PC-9 (cell line): ENCODE measurements at regions of chr10 and their contacts with region 1.

Region 1: GRCh38 chr10:52883996-52884871 is 111.7 kb upstream of the MBL2 start:
- DNase-seq: peak; percentile 91 to 98
- H3K4me3 ChIP-seq: peak overlapping the region; percentile 13; the same call in 1 of the 2 replicates
- H3K27ac ChIP-seq: peak overlapping the region; percentile 28; the same call in 1 of the 2 replicates
- H3K4me1 ChIP-seq: peaks cover 13% of the 10 kb centered on the region; the same call in 1 of the 2 replicates
- H3K27me3 ChIP-seq: 0 out of 2 replicates have a peak, but pooled peaks cover 7% of the 10 kb centered on the region
- CTCF ChIP-seq: peak; percentile 97

Region 2: DNA sequence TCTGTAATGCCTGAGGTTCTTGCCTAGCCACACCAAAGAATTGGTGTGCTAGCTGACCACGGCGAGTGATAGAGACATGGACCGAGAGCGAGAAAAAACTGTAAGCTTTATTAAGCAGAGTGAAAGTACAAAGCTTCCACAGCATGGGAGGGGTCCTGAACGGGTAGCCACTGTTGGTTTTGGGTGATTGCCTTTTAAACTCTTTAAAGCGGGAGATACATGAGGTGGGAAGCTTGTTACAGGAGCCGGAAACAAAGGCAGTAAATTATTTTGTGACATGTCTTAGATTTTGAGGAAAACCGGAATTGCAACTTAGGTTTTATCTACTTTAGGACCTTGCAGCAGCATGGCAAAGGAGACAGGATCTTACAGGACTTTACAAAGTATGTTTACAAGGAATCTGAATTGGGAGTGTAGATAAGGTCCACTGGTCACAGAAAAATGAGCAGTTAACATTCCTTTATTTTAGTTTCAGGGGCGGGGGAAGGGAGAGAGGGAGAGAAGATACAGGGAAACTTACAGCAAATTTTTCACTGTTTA is 141.0 kb after region 1 on chr10:
- CTCF ChIA-PET with region 1: no interaction called
- POLR2A ChIA-PET with region 1: no interaction called
- intact Hi-C with region 1: loop called (anchors 2 kb)
- DNase-seq: peak; percentile 29 to 49
- H3K4me3 ChIP-seq: peak overlapping the region; percentile 40; the same call in 1 of the 2 replicates
- H3K27ac ChIP-seq: peak overlapping the region; percentile 51
- H3K4me1 ChIP-seq: peaks cover 30% of the 10 kb centered on the region
- H3K27me3 ChIP-seq: no peaks in the 10 kb centered on the region
- CTCF ChIP-seq: no peak

Region 3: DNA sequence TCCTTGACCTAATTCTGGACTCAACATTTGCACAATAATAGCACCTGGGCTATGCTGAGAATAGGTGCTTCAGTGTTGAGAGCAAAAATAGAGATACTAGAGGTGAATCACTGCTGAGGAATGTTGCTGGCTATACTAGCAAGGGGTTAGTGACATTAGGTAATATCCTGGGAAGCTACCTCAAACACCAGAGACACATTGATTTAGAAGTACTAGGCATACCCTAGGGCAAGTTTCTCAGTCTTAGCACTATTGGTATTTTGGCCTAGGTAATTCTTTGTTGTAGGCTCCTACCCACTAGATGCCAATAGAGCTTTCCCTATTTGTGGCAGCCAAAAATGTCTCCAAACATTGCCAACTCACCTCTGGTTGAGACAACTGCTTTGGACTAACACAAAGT is 372.4 kb after region 1 on chr10:
- CTCF ChIA-PET with region 1: no interaction called
- POLR2A ChIA-PET with region 1: interaction called, 15 read pairs
- intact Hi-C with region 1: loop called (anchors 1 kb)
- DNase-seq: peak; percentile 48 to 92
- H3K4me3 ChIP-seq: no peak overlapping the region
- H3K27ac ChIP-seq: peak overlapping the region; percentile 65
- H3K4me1 ChIP-seq: peaks cover 20% of the 10 kb centered on the region
- H3K27me3 ChIP-seq: no peaks in the 10 kb centered on the region
- CTCF ChIP-seq: no peak

Region 4: DNA sequence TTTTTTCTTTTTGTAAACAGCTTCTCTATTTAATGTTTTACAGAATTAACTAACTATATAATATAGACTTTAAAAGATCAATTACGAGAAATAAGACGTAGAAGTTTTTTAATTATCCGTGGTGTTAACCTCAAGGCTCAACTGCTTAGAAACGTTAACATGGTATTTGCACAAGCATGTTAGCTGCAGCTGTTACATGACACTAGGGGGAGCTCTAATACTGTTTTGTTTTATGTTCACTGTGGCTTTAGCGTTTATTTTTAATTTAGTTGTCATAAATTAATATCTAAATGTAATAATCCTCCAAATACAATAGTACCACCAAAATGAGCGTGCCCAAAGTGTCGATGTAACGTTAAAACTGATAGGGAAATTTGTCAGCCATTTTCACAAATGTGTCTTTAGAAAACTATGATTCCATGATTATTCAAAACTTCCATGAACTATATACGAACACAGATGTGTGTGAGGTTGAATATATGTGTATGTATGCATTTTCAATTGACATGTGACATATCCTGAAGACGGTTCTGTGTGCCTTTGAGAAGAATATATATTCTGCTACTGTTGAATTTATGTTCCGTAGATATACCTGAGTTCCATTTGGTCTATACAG is 717.1 kb after region 1 on chr10:
- CTCF ChIA-PET with region 1: no interaction called
- POLR2A ChIA-PET with region 1: no interaction called
- intact Hi-C with region 1: loop called (anchors 5 kb)
- DNase-seq: peak in 1 of 2 experiments; percentile 39
- H3K4me3 ChIP-seq: no peak overlapping the region
- H3K27ac ChIP-seq: no peak overlapping the region
- H3K4me1 ChIP-seq: no peaks in the 10 kb centered on the region
- H3K27me3 ChIP-seq: no peaks in the 10 kb centered on the region
- CTCF ChIP-seq: peak; percentile 91